Left colon (tissue), 2 donors: ENCODE measurements at regions of chr6 and their contacts with region 1.

Region 1: DNA sequence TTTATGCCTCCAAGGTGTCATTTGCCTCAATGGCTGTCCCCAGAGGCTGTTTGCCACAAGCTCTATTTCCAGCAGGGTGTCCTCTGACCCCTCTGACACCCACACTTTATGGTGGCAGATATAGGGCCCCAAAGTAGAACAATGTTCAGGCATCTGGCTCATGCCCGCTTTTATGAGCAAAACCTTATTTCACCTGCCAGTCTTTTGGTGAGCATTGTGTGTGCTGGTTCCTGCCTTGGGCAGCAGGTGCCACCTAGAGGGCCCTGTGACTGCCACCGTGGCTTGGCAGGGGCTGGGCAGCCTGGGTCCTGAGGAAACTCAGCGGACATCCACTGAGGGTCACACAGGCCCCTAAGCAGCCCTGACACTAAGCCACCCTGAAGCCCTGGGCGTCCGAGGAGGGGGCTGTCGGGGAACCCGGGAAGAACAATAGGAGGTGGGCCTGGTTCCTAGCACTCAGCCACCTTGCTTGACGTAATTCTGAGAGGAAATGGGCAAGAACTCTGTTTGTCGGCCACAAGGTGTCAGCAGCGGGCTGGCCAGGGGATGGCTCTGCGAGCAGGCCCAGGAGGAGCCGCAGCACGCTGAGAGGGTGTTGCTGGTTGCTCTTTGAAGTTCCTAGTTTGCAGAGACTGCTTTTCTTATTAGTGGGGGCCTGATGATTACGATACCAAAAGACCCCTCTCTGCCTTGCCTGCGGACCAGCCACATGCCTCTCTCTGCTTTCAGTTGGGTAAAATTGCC is 148.9 kb downstream of the SCML4 start:
- DNase-seq: peak; percentile 81 to 82
- ATAC-seq: peak; percentile 97

Region 2: GRCh38 chr6:107560657-107561056 is 114.5 kb before region 1 on chr6:
- intact Hi-C with region 1: no loop called
- DNase-seq: no peak
- ATAC-seq: no peak

Region 3: DNA sequence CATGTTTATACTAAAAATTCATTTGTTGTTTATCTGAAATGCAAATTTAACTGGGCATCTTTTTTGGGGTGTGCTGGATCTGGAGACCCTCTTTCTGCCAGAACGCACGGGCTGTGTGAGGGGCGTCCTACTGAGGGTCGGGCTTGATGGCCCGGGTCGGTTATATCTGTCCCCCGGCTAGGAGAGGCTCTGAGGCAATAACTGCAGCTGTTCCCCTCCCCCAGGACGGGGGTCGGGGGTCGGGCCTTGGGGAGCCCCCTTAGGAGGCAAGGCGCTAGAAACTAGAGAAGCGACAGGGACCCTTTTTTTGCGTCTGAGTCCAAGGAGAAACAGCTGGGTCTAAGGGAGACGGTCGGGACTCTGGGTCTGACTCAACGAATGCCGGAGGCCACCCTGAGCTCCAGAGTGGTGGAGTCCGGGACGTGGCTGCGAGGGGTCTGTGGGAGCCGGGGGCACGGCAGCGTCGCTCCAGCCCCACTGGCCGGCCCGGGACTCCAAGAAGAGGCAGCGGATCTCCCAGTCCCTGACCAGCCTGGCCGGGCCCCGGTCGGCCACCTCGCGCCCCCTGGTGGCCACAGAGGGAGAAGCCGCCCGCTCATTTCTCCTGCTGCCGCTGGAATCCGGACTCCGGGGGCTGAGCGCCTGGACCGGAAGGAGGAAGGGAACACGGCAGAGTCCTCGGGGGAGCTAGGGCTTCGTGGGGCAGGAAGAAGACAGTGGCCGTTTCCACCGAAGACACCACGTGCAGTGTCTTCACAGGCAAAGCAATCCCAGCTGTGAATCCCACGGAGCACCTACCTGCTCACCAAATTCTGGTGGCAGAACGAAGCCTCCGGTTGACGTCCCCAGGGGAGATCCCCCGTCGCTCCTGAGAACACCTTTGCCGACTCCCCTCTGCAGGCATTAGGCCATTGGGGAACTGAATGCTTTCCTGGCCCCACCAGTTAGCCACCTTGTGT is 173.0 kb after region 1 on chr6:
- intact Hi-C with region 1: loop called in 1 of 2 experiments (anchors 10 kb)
- DNase-seq: peak; percentile 71 to 88
- ATAC-seq: peak; percentile 99